Activated B cell treated with CpG ODN at 0.5 μM for 24 hours (primary cell): ENCODE measurements at regions of chr3 and their contacts with region 1.

Region 1: DNA sequence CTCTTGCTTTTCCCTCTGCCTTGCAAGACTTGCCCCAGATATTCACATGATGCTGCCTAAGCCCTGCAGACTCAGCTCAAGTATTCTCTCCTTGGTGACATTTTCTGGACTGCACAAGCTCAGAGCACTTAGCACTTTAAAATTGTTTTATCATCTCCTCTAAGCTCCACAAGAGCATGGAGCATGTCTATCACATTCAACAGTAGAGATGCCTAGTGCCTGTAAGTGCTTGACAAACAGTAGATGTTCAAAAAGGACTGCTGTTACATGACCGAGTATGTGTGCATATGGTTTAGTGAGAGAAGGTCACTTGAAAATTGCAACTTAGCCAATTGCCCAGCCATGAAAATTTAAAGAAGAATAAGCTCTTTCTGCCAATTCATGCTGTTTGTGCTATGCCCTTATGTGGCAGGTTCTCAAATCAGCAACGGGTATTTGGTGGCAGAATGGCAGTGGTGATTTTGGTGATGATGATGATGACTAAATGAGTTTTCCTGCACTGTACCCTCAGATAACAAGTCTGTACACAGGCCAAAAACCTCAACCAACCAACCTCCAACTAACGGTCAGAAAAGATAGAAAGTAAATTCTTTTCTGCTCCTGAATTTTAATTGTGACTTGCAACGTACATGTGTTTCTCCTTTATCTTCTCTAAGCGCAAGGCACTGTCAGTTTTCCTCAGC is 647.2 kb upstream of the UBE2E2 start:
- DNase-seq: no peak
- ATAC-seq: no peak
- H3K4me3 Mint-ChIP-seq: no peak overlapping the region
- H3K27ac Mint-ChIP-seq: no peak overlapping the region
- H3K4me1 Mint-ChIP-seq: no peaks in the 10 kb centered on the region
- H3K27me3 Mint-ChIP-seq: no peaks in the 10 kb centered on the region
- CTCF ChIP-seq: no peak

Region 2: DNA sequence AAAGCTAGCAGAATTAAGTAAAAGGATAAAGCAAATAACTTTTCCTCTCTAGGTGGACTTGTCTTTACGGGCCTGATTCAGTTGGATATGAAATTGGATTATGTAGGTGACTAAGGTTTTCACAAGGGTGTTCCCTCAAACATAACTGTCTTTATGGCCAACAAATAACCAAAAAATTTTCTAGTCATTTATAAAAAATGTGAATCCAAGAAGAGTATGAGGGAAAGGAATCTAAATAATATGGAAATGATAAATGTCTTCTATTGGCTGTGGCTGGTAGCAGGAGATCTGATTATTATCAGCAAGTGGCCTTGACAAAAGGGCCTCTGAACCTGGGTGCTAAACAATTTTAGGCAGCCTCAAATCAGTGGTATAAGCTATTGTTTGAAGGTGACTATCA is 53.2 kb after region 1 on chr3:
- CTCF ChIA-PET with region 1: no interaction called
- POLR2A ChIA-PET with region 1: no interaction called
- intact Hi-C with region 1: no loop called
- DNase-seq: no peak
- ATAC-seq: no peak
- H3K4me3 Mint-ChIP-seq: no peak overlapping the region
- H3K27ac Mint-ChIP-seq: no peak overlapping the region
- H3K4me1 Mint-ChIP-seq: no peaks in the 10 kb centered on the region
- H3K27me3 Mint-ChIP-seq: no peaks in the 10 kb centered on the region
- CTCF ChIP-seq: no peak

Region 3: DNA sequence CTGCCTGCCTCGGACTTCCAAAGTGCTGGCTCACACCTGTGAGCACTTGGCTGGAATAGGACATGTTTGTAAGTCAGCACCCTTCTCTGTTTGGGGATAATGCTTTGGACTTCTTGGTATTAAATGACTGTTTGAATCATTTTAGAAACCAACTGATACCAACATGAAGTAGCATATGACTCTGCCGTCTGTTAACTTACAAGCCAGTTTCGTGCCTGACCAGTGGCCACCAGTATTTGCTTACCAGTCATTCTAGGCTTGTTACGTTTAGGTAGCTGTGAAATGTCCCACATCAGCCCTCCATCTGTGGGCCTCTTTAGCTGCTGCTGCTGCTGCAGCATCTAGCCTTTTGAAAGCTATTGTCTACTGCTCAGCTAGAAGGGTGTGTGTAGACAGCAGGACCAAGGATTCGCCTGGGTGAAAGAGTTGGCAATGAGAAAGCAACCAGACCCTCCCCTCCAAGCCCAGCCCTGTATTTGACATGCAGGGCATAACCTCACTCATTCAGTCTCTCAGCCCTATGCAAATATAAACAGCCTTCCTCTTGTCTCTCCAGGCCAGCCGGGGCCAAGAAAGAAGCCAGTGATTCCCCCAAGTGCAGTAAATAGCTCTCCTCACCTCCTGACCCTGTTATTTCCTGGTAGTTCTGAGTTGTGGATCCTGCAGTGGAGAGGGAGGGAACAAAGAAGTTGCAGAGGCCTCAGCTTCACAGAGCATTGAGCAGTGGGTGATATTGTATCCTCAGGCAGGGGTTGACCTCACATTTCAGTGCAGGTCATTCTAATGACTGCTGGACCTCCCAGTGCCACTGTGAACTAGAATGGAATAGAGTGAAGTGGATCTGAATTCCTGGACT is 1309.9 kb after region 1 on chr3:
- CTCF ChIA-PET with region 1: no interaction called
- POLR2A ChIA-PET with region 1: no interaction called
- intact Hi-C with region 1: loop called (anchors 5 kb)
- DNase-seq: no peak
- ATAC-seq: peak; percentile 57
- H3K4me3 Mint-ChIP-seq: no peak overlapping the region
- H3K27ac Mint-ChIP-seq: no peak overlapping the region
- H3K4me1 Mint-ChIP-seq: peaks cover 45% of the 10 kb centered on the region
- H3K27me3 Mint-ChIP-seq: no peaks in the 10 kb centered on the region
- CTCF ChIP-seq: no peak